ENCODE measurements at regions of chr15 and their contacts with region 1.

Region 1: DNA sequence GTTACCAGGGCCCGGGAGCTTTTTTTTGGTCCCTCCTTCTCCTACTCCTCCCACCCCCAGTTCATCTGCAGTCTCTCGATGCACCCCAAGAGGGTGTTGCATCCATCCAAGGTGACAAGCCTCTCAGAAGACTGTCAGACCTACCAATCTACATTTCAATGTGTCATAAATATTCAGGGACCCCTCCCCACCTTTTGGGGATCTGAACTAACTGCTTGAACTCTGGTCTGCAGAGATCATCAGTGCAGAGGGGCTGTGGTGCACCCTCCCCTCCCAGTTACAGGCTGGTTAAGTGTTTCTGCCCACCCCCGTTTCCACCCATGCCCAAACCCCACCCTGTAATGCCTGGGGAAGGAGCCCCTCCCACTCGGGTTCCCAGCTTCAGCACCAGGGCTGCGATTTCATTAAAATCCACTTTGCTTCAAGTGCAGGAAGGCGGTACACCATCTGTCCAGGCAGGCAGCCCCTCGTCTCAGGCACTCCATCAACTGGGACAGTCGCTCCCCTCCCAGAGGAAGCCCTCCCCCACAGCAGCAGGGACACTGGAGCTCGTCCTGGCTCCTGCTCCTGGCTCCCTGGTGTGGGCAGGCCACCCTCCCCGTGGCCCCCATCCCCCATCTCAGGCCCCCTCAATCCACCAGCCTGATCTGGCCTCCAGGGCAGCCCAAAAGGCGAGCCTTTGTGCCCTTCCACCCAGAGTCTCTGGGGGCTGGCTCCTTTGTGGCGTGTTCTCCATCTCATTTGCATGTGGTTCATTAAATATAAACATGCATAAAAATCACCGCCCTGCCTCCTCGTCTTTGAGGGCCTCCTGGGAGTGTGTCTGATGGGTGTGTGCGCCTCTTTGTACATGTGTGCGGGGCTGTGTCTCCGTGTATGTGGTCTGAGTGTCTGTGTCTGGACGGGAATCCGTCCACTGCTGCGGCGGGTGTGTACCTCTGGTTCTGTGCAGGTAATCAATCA is 32.3 kb downstream of the RNU5B-1 start:
- DNase-seq: no peak
- ATAC-seq: no peak
- H3K4me3 ChIP-seq: no peak overlapping the region
- H3K27ac ChIP-seq: no peak overlapping the region
- H3K4me1 ChIP-seq: peaks cover 0 to 3% (median 0%) of the 10 kb centered on the region in 9 donors
- H3K27me3 ChIP-seq: peaks cover 0 to 14% (median 0%) of the 10 kb centered on the region in 7 donors
- CTCF ChIP-seq: no peak

Region 2: DNA sequence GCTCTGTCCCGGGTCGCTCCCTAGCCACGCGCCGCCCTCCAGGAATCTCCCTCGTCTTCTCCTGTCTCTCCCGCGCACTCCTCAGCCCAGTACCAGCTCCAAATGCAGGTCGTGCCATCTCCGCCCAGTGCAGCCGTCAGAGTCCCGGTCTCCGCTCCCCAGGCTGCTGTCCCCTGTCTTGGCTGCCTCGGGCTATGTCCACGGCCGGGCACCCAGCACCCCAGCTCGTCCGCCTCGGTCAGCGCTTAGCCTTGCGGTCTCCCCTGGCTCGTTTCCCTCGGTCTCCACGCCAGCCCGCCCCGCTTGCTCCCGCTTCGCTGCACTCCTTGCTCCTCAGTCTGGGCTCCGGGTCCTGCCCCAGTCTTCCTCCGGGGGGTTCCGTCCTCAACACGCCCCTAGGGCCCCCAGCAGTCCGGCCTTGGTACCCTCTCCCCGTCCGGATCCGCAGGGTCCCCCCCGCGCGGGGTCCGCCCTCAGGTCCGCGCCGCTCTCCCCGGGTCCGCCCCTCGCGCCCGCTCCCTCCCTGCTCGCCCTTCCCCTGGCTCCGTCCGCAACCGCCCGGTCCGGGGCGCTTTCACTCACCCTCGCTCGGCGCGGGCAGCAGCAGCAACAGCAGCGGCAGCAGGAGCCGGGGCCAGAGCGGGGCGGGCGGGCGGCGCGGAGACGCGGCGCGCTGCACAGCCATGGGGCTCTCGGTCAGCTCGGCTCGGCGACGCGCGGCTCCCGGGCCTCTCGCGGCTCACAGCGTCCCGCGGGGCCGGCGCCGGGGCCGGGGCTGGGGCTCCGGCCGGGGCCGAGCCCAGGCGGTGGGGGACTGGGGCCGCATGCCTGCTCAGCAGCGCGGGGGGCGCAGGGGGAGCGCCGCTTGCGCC is 40.6 kb after region 1 on chr15:
- intact Hi-C with region 1: loop called in 2 of 10 experiments (anchors 5 kb)
- DNase-seq: no peak
- ATAC-seq: peak; percentile 46 to 75 (median 60)
- H3K4me3 ChIP-seq: peak overlapping the region in 9 of 10 donors; percentile 47 to 74 (median 62)
- H3K27ac ChIP-seq: no peak overlapping the region
- H3K4me1 ChIP-seq: peaks cover 8 to 21% (median 18%) of the 10 kb centered on the region in 9 donors
- H3K27me3 ChIP-seq: peaks cover 0 to 83% (median 58%) of the 10 kb centered on the region in 7 donors
- CTCF ChIP-seq: no peak

Measured in heart right ventricle (tissue), 16 donors.